Left ventricle myocardium inferior (tissue), 1 donor: ENCODE measurements at regions of chr18 and their contacts with region 1.

Region 1: GRCh38 chr18:56575819-56576663 is 62.4 kb downstream of the TXNL1 start:
- DNase-seq: no peak
- H3K4me3 ChIP-seq: no peak overlapping the region
- H3K27ac ChIP-seq: peak overlapping the region; percentile 76
- H3K4me1 ChIP-seq: peaks cover 37% of the 10 kb centered on the region
- H3K27me3 ChIP-seq: no peaks in the 10 kb centered on the region
- CTCF ChIP-seq: peak; percentile 86

Region 2: DNA sequence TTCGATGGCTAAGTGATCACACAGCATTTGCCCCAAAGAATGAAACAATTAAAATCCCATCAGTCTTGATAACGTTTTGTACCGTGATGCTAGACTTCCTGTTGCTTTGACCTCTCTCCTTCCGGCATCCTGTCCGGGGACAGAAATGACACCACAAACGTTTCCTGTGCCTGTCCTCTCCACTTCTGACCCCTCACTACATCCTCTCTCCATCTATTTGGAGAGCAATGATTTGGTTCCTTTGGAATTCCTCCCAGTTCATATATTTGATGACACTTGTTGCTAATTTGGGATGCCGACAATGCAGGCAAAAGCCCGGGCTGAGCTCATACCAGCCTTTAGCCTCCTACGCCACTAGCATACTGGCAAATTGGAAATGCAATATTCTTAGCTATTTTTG is 1465.6 kb before region 1 on chr18:
- intact Hi-C with region 1: loop called (anchors 10 kb)
- DNase-seq: peak; percentile 26
- H3K4me3 ChIP-seq: no peak overlapping the region
- H3K27ac ChIP-seq: peak overlapping the region; percentile 85
- H3K4me1 ChIP-seq: peaks cover 32% of the 10 kb centered on the region
- H3K27me3 ChIP-seq: no peaks in the 10 kb centered on the region
- CTCF ChIP-seq: no peak

Region 3: GRCh38 chr18:55322178-55322735 is 1253.8 kb before region 1 on chr18:
- intact Hi-C with region 1: loop called (anchors 5 kb)
- DNase-seq: peak; percentile 87
- H3K4me3 ChIP-seq: peak overlapping the region; percentile 76
- H3K27ac ChIP-seq: peak overlapping the region; percentile 98
- H3K4me1 ChIP-seq: peaks cover 63% of the 10 kb centered on the region
- H3K27me3 ChIP-seq: no peaks in the 10 kb centered on the region
- CTCF ChIP-seq: peak; percentile 34

Region 4: GRCh38 chr18:55781481-55781957 is 794.5 kb before region 1 on chr18:
- intact Hi-C with region 1: loop called (anchors 10 kb)
- DNase-seq: peak; percentile 35
- H3K4me3 ChIP-seq: no peak overlapping the region
- H3K27ac ChIP-seq: peak overlapping the region; percentile 94
- H3K4me1 ChIP-seq: peaks cover 44% of the 10 kb centered on the region
- H3K27me3 ChIP-seq: no peaks in the 10 kb centered on the region
- CTCF ChIP-seq: peak; percentile 75

Region 5: DNA sequence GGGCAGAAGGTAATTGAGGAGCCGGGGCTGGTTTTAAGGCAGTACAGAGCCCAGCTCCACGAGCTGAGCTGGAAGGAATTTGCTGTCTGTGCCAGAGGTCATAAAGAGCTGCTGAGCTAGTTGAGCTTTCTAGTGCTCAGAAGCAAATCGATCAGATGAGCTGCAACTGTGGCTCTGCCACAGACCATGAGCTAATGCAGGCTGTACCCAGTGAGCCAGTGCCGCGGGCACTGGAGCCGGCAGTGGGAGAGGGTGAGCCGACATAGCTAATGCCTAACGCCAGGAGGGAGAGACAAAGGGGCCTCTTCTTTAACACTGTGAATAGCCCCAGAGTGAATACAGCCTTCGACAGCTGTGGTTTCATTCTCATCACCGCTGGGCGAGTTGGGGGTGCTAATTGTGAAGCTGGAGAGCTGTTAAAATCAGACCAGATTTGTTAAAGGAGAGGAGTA is 577.9 kb before region 1 on chr18:
- intact Hi-C with region 1: loop called (anchors 10 kb)
- DNase-seq: no peak
- H3K4me3 ChIP-seq: peak overlapping the region; percentile 40
- H3K27ac ChIP-seq: peak overlapping the region; percentile 65
- H3K4me1 ChIP-seq: peaks cover 22% of the 10 kb centered on the region
- H3K27me3 ChIP-seq: no peaks in the 10 kb centered on the region
- CTCF ChIP-seq: no peak

Region 6: DNA sequence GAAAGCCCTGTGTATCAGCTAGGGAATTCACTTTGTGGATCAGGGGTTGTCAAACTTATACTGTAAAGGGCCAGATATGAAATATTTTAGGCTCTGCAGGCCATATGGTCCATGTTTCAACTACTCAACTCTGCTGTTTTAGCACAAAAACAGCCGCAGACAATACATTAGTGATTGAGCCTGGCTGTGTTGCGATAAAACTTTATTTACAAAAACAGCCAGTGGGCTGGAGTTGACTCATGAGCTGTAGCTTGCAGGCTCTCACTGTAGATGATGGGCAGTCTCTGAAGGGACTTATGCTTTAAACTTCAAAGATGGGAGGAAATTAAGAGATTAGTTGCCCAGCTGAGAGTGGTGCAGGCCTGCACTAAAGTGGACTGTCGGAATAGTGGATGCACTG is 108.2 kb after region 1 on chr18:
- intact Hi-C with region 1: no loop called
- DNase-seq: no peak
- H3K4me3 ChIP-seq: no peak overlapping the region
- H3K27ac ChIP-seq: no peak overlapping the region
- H3K4me1 ChIP-seq: peaks cover 5% of the 10 kb centered on the region
- H3K27me3 ChIP-seq: no peaks in the 10 kb centered on the region
- CTCF ChIP-seq: no peak